HEK293 (cell line): ENCODE measurements at regions of chr2 and their contacts with region 1.

Region 1: GRCh38 chr2:96116879-96117697 is 717 bp upstream of the ADRA2B start:
- H3K4me3 ChIP-seq: peak overlapping the region; percentile 36
- H3K27ac ChIP-seq: no peak overlapping the region; the same call in 1 of the 2 replicates
- H3K4me1 ChIP-seq: no peaks in the 10 kb centered on the region
- CTCF ChIP-seq: no peak

Region 2: DNA sequence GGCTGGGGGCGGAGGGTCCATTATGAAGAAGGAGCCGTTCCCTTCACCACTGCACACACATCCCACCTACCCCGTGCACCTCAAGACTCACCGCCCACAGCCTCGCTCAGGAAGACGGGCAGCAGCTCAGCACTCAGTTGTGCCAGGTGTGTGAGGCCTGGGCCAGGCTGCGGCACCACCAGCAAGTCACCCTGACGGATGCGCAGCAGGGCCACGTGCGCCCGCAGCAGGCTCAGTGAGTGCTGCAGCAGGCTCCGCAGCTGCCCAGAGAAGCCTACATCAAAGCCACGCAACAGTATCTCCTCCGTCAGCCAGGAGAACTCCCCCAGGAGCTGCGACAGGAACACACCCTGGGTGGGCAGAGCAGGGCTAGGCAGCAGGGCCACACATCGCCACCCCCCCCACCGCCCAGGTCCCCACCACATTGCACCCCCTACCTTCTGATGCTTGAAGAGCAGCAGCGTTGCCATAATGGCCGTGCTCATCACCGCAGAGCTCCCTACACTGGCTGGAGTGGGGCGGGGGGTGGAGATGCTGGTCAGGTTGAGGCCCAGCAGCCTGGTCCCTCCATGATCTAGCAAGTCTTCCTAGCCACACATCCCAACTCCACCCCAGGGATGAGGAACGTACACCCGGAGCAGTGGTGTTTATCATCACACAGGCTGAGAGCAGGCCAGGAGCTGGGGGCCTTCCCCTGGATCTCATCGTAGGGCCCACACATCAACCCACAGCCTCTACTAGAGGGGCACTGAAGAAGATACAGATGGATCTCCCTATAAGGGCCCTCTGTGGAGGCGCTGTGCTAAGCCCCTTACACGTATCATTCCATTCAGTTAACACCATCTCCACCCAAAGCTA is 92.5 kb before region 1 on chr2:
- CTCF ChIA-PET with region 1: interaction called, 29 read pairs
- POLR2A ChIA-PET with region 1: no interaction called
- H3K4me3 ChIP-seq: no peak overlapping the region
- H3K27ac ChIP-seq: no peak overlapping the region
- H3K4me1 ChIP-seq: no peaks in the 10 kb centered on the region
- CTCF ChIP-seq: no peak

Region 3: DNA sequence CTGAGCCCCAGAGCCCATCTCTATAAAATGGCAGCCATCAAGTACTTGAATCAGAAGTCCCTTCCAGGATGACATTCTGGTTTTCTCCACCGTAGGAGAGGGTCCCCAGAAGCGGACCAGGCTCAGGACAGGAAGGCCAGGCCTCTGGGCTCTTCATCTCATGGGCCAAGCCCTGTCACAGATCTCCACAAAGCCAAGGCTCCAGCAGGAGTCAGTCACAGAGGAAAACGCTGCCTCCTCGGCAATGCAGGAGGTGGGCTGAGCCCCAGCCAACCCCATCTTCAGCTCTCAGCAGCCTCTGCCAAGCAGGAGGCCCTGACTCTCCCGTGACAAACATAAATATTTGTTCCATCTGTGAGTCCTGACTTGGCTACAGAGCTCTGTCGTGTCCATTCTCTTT is 42.9 kb before region 1 on chr2:
- CTCF ChIA-PET with region 1: interaction called, 13 read pairs
- POLR2A ChIA-PET with region 1: no interaction called
- H3K4me3 ChIP-seq: no peak overlapping the region
- H3K27ac ChIP-seq: no peak overlapping the region
- H3K4me1 ChIP-seq: no peaks in the 10 kb centered on the region
- CTCF ChIP-seq: no peak

Region 4: GRCh38 chr2:96131813-96132745 is 15.0 kb after region 1 on chr2:
- CTCF ChIA-PET with region 1: interaction called, 12 read pairs
- POLR2A ChIA-PET with region 1: no interaction called
- H3K4me3 ChIP-seq: no peak overlapping the region
- H3K27ac ChIP-seq: no peak overlapping the region
- H3K4me1 ChIP-seq: no peaks in the 10 kb centered on the region
- CTCF ChIP-seq: no peak

Region 5: GRCh38 chr2:96145036-96145847 is 28.2 kb after region 1 on chr2 and contains the start of gene DUSP2:
- CTCF ChIA-PET with region 1: interaction called, 14 read pairs
- POLR2A ChIA-PET with region 1: no interaction called
- H3K4me3 ChIP-seq: peak within 1 kb of the TSS; percentile 21
- H3K27ac ChIP-seq: no peak within 1 kb of the TSS; the same call in 1 of the 2 replicates
- H3K4me1 ChIP-seq: peaks cover 9% of the 10 kb centered on the region; the same call in 1 of the 2 replicates
- CTCF ChIP-seq: no peak

Region 6: GRCh38 chr2:96164459-96165184 is 47.5 kb after region 1 on chr2:
- CTCF ChIA-PET with region 1: no interaction called
- POLR2A ChIA-PET with region 1: no interaction called
- H3K4me3 ChIP-seq: no peak overlapping the region
- H3K27ac ChIP-seq: no peak overlapping the region
- H3K4me1 ChIP-seq: no peaks in the 10 kb centered on the region
- CTCF ChIP-seq: no peak